Activated CD4-positive, alpha-beta T cell treated with anti-CD3 and anti-CD28 coated beads, Interleukin-2, amount 10 ng/mL, durations not matched to agents 24 days and 14 days (primary cell): ENCODE measurements at regions of chr14 and their contacts with region 1.

Region 1: DNA sequence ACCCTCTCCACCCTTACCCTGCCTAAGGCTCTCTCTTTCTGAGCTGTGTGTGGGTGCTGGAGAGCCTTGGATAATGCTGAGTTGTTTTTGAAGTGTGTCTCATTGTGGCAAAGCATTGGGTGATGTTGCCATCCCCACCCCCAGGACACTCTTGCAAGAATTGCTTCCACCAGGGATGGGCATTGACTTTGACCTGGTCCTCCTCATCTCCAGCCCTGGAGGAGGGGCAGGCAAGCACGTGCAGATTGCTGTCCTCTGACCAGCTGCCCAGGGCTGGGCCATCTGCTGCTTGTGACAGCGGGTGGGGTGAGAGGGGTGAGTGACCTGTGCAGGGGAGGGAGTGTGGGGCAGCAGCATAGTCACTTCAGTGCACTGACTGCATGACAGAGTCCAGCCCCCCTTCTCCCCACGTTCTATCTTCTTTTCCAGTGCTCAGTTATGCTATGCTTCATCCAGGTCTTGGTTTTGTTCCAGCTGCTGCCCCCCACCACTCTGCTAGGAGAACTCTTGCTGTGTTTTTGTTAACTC is 26.2 kb downstream of the SUSD6 start:
- DNase-seq: peak; percentile 64
- H3K4me3 Mint-ChIP-seq: peak overlapping the region; percentile 73
- H3K27ac Mint-ChIP-seq: peak overlapping the region; percentile 92
- H3K4me1 Mint-ChIP-seq: peaks cover 76% of the 10 kb centered on the region
- H3K27me3 Mint-ChIP-seq: no peaks in the 10 kb centered on the region

Region 2: DNA sequence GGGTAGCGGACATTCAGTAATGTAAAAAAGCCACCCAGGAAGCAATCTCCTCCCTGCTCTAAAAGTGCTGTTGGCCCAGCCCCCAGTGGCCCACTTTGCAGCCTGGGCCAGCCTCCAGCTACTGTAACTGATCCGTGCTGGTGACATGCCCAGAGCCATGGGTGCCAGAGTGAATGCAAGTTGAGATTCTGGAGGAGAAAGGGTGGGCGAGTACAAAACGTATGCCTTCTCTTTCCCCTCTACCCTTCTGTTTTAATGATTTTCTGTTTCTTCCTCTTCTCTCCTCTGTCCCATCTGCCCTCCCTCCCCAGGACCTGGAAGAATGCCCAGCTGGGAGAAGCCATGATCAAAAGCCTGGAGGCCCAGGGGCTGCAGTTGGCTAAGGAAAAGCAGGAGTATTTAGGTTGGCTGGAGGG is 136.1 kb before region 1 on chr14:
- intact Hi-C with region 1: no loop called
- DNase-seq: no peak
- H3K4me3 Mint-ChIP-seq: no peak overlapping the region
- H3K27ac Mint-ChIP-seq: no peak overlapping the region
- H3K4me1 Mint-ChIP-seq: no peaks in the 10 kb centered on the region
- H3K27me3 Mint-ChIP-seq: peaks cover 2% of the 10 kb centered on the region

Region 3: DNA sequence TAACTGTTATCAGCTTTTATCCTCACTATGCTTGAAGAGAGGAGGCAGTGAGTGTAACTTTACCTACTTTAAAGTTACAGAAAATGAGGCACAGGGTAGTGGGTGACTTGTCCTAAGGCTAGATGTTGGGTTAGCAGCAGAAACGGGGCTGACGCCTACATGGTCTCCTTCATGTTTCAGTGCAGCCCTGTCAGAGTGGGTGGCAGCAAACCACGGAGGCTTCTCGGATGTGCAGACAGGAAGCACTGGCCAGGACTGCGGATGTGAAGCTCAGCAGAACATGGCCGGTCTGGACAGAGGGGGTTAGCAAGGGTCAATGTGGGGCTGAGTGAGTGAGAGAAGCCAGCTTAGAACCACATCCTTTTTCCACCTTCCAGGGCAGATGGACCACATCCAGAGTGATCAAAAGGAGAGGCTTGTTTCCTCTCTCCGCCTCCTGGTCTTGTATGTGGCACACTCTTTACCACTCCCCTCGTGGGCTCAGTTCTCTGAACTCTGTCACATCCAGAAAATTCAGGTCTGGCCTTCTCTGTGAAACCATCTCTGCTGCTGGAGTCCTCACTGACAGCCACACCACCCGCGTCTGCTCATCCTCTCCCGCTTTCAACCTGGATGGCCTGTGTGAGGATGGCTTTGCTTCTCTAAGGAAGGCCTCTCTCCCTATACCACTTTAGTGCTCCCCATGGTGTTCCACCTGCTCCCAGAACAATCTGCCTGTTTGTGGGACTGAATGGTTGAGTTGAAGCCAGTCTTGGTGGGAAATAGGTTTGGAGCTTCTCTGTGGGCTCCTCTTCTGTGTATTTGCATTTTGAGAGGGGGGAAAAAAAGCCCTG is 12.1 kb before region 1 on chr14:
- intact Hi-C with region 1: loop called (anchors 1 kb)
- DNase-seq: peak; percentile 93
- H3K4me3 Mint-ChIP-seq: peak overlapping the region; percentile 81
- H3K27ac Mint-ChIP-seq: peak overlapping the region; percentile 96
- H3K4me1 Mint-ChIP-seq: peaks cover 80% of the 10 kb centered on the region
- H3K27me3 Mint-ChIP-seq: no peaks in the 10 kb centered on the region

Region 4: GRCh38 chr14:69650948-69651369 is 13.4 kb after region 1 on chr14:
- intact Hi-C with region 1: no loop called
- DNase-seq: peak; percentile 59
- H3K4me3 Mint-ChIP-seq: peak overlapping the region; percentile 59
- H3K27ac Mint-ChIP-seq: peak overlapping the region; percentile 80
- H3K4me1 Mint-ChIP-seq: peaks cover 77% of the 10 kb centered on the region
- H3K27me3 Mint-ChIP-seq: no peaks in the 10 kb centered on the region

Region 5: GRCh38 chr14:70407621-70408020 is 770.1 kb after region 1 on chr14:
- intact Hi-C with region 1: no loop called
- DNase-seq: no peak
- H3K4me3 Mint-ChIP-seq: no peak overlapping the region
- H3K27ac Mint-ChIP-seq: no peak overlapping the region
- H3K4me1 Mint-ChIP-seq: no peaks in the 10 kb centered on the region
- H3K27me3 Mint-ChIP-seq: no peaks in the 10 kb centered on the region